Activated CD4-positive, alpha-beta memory T cell treated with anti-CD3 and anti-CD28 coated beads for 36 hours (primary cell): ENCODE measurements at regions of chr6 and their contacts with region 1.

Region 1: DNA sequence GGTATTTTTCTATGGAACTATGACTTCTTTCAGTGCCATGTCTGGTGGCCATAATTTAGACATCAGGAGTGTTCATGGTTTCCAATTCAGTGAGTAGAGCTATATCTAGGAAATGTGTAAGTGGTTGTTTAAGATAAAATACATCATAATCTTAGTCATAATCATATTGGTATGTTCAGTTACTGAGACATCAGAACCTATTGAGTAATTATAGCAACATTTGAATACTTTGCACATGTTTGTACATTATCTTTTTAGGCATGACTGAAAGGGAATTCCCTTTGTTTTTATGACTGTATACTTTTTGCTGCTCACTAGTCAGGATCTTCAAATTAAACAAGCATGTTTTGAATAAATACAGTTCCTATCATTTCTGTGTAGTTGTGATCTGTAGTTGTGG is 64.0 kb downstream of the STXBP5 start:
- DNase-seq: no peak
- H3K4me3 Mint-ChIP-seq: no peak overlapping the region
- H3K27ac Mint-ChIP-seq: peak overlapping the region; percentile 70
- H3K4me1 Mint-ChIP-seq: peaks cover 18% of the 10 kb centered on the region
- H3K27me3 Mint-ChIP-seq: no peaks in the 10 kb centered on the region

Region 2: DNA sequence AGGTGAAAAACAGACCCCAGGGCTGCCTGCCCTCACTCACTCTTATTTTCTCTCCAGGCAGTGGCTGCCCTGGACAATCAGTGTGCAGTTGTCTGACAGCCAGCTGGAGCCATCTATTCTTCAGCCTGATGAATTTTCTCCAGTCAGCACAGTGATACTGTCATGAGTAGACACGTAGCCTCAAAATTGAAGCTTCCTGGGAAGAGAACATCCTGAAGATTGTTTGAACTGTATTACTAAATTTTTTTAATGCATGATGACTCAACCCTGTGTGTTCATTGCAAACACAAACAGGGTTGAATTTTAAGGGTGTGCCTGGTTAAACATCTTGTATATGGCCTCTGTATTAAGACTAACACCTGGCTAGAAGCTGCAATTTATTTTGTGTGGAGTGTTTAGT is 113.8 kb before region 1 on chr6:
- CTCF ChIA-PET with region 1: no interaction called
- POLR2A ChIA-PET with region 1: no interaction called
- intact Hi-C with region 1: no loop called
- DNase-seq: no peak
- H3K4me3 Mint-ChIP-seq: no peak overlapping the region
- H3K27ac Mint-ChIP-seq: no peak overlapping the region
- H3K4me1 Mint-ChIP-seq: no peaks in the 10 kb centered on the region
- H3K27me3 Mint-ChIP-seq: peaks cover 2% of the 10 kb centered on the region

Region 3: DNA sequence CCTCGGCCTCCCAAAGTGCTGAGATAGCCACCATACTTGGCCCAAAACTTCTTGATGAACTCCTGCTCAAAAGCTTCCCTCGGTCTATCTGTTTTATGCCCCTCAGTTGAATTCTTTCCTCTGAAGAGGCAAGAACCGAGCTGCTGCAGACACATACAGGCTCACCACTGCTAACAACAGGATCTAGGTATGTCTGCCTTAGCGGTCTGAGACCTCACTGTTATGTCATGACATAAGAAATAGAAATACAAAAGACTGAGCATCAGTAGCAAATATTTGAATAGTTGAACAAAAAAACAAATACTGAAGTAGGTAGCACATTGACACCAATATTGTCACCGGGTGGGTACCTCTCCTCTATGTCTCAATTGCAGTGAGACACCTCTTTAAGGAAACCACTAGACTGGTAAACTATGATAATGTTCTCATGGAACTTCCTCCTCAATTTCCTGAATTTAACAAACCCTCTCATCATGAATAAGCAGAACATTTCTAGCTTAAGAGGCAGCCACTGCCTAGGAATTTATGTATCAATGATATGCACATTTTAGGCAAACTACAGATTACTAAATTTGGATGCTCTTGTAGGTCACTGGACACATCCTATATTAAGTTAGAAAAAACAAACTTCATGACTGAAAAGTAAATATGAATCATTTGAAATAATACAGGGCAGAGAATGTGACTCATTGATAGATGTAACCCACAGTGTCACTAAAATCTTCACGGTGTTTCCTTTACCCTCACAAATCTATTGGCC is 73.4 kb before region 1 on chr6:
- CTCF ChIA-PET with region 1: no interaction called
- POLR2A ChIA-PET with region 1: no interaction called
- intact Hi-C with region 1: loop called (anchors 1 kb)
- DNase-seq: no peak
- H3K4me3 Mint-ChIP-seq: peak overlapping the region; percentile 21
- H3K27ac Mint-ChIP-seq: peak overlapping the region; percentile 87
- H3K4me1 Mint-ChIP-seq: peaks cover 21% of the 10 kb centered on the region
- H3K27me3 Mint-ChIP-seq: no peaks in the 10 kb centered on the region

Region 4: DNA sequence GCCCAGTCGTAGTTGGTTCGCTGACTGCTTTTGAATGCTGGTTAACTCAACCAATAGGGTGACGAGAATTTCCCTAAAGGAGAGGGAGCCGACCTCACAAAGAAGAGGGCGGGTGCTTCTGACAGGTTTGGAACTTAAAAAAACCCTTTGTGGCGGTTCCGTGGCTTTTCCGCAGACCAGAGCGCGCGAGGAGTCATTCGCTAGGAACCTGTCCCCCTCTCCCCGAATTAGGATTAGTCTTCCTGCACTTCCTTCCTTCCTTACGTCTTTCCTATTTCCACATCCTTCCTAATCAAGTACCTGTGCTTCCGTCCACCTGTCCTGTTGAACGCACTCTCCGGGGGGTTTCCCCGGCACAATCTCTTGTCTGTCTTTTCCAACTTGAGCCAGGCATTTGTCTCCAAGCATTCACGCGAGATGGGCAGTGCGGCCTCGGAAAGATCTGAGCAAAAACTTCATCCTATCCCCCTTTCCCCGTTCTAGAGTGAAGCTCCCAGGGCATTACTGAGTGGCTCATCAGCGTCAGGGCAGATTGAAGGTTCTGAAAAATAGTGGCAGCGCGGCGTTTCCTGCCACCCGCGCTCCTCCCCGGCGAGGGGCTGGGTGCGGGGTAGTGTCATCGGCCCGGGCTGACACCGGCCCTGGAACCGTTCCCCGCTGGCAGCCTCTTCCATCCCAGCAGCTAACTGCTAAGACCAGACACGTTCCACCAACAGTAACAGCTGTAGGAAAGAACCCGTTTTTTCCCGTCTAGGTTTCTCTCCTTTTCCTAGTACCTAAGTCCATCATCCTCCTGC is 65.5 kb before region 1 on chr6:
- CTCF ChIA-PET with region 1: interaction called, 5 read pairs
- POLR2A ChIA-PET with region 1: interaction called, 3 read pairs
- intact Hi-C with region 1: loop called (anchors 1 kb)
- DNase-seq: peak; percentile 87
- H3K4me3 Mint-ChIP-seq: peak overlapping the region; percentile 81
- H3K27ac Mint-ChIP-seq: peak overlapping the region; percentile 96
- H3K4me1 Mint-ChIP-seq: peaks cover 21% of the 10 kb centered on the region
- H3K27me3 Mint-ChIP-seq: no peaks in the 10 kb centered on the region

Region 5: DNA sequence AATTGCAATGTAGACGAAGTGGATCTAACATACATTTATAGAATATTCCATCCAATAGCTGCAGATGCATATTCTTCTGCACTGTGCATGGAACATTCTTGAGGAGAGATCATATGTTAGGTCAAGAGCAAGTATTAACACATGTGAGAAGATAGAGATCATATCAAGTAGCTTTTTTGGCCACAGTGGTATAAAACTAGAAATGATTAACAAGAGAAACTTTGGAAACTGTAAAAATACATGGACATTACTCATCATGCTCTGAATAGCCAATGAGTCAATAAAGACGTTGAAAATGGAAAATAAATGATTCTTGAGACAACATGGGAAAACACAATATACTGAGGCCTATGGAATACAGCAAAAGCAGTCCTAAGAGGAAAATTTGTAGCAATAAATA is 30.2 kb after region 1 on chr6:
- CTCF ChIA-PET with region 1: no interaction called
- POLR2A ChIA-PET with region 1: no interaction called
- intact Hi-C with region 1: loop called (anchors 1 kb)
- DNase-seq: no peak
- H3K4me3 Mint-ChIP-seq: no peak overlapping the region
- H3K27ac Mint-ChIP-seq: peak overlapping the region; percentile 7
- H3K4me1 Mint-ChIP-seq: peaks cover 23% of the 10 kb centered on the region
- H3K27me3 Mint-ChIP-seq: no peaks in the 10 kb centered on the region